Naive thymus-derived CD4-positive, alpha-beta T cell (primary cell): ENCODE measurements at regions of chr3 and their contacts with region 1.

Region 1: GRCh38 chr3:47781685-47782445 is at the start of gene SMARCC1:
- DNase-seq: peak; percentile 95 to 99 (median 97)
- ATAC-seq: peak; percentile 95
- H3K4me3 ChIP-seq: peak within 1 kb of the TSS; percentile 65
- H3K4me3 Mint-ChIP-seq: peak within 1 kb of the TSS; percentile 87 to 98 (median 94)
- H3K27ac ChIP-seq: peak within 1 kb of the TSS; percentile 99
- H3K27ac Mint-ChIP-seq: peak within 1 kb of the TSS; percentile 93 to 100 (median 98)
- H3K4me1 ChIP-seq: peaks cover 18 to 21% of the 10 kb centered on the region in 2 donors
- H3K4me1 Mint-ChIP-seq: peaks cover 18 to 30% (median 23%) of the 10 kb centered on the region in 7 donors
- H3K27me3 ChIP-seq: no peaks in the 10 kb centered on the region
- H3K27me3 Mint-ChIP-seq: peaks cover 0 to 3% (median 0%) of the 10 kb centered on the region in 5 donors
- total RNA-seq, gene SMARCC1: 92.2 to 125 (median 99.1) TPM

Region 2: DNA sequence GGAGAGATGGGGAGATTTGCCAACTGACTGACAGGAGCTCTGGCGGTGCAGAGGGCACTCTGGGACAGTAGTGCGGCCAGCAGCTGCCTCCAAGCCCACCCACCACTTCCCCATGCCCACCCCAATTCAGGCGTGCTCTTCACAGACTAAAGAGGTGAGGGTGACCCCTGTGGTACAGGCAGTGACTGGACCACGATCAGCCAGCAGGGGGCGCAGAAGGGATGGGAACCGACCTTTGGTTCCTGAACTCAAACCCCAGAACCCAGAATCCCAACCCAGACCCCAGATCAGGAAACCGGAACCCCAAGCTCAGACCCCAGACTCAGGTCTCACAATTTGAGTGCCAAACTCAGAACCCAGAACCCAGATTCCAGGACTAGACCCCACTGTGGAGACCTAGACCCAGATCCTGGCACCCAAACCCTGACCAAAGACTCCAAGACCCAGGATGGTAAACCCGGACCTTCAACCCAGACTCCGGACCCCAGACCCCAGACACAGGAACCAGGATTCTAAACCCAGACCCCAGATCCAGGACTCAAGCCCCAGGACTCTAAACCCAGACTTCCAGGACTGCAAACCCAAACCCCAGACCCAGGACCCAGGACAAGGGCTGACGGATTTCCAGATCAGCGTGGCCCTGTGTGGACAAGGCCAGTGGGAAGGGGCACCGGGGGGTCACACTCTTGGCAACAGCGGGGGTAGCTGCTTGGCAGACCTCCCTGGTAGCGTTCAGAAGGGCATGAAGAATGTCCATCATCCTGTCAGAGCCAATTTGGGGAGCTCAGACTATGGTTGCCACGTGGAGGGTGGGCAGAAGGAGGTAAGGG is 914.9 kb before region 1 on chr3:
- CTCF ChIA-PET with region 1: no interaction called
- POLR2A ChIA-PET with region 1: no interaction called
- intact Hi-C with region 1: loop called in 1 of 2 experiments (anchors 5 kb)
- DNase-seq: peak; percentile 38 to 80 (median 66)
- ATAC-seq: peak; percentile 69
- H3K4me3 ChIP-seq: no peak overlapping the region
- H3K4me3 Mint-ChIP-seq: no peak overlapping the region
- H3K27ac ChIP-seq: no peak overlapping the region
- H3K27ac Mint-ChIP-seq: peak overlapping the region in 1 of 9 donors; percentile 21
- H3K4me1 ChIP-seq: no peaks in the 10 kb centered on the region
- H3K4me1 Mint-ChIP-seq: no peaks in the 10 kb centered on the region
- H3K27me3 ChIP-seq: no peaks in the 10 kb centered on the region
- H3K27me3 Mint-ChIP-seq: peaks cover 0 to 8% (median 0%) of the 10 kb centered on the region in 5 donors

Region 3: DNA sequence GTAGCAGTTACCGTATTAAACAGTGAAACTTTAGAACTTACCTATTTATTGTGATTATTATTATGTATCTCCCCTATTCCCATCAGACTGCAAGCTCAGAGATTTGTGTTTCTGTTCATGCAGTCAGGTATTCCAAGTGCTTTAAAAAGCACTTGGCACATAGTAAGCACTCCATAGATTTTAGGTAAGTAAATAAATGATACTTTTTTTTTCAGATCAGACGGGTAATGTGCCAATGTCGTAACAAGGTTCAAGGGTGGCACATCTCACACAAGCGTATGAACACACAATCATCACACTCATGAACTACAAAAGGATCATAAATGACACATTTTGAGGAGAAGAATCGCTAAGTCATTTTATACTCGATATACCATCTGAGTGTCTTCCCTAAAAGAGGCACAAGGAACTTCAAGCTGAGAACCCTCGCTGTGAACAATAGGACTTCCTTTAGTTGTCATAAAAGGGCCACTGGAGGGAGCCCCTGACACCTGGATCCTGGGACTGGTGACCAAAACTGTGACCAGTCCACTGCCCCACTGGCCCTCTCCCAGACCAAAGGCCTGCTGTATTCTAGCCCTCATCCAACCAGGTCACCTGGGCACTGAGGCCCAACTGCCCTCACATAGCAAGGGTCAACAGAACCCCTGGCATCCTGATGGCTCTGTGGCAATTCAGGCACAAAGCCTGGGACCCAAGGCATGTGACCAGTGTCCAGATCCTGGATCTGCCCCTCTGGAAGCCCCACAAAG is 531.4 kb before region 1 on chr3:
- CTCF ChIA-PET with region 1: interaction called, 11 read pairs
- POLR2A ChIA-PET with region 1: no interaction called
- intact Hi-C with region 1: no loop called
- DNase-seq: no peak
- ATAC-seq: no peak
- H3K4me3 ChIP-seq: no peak overlapping the region
- H3K4me3 Mint-ChIP-seq: no peak overlapping the region
- H3K27ac ChIP-seq: no peak overlapping the region
- H3K27ac Mint-ChIP-seq: no peak overlapping the region
- H3K4me1 ChIP-seq: no peaks in the 10 kb centered on the region
- H3K4me1 Mint-ChIP-seq: no peaks in the 10 kb centered on the region
- H3K27me3 ChIP-seq: no peaks in the 10 kb centered on the region
- H3K27me3 Mint-ChIP-seq: no peaks in the 10 kb centered on the region

Region 4: DNA sequence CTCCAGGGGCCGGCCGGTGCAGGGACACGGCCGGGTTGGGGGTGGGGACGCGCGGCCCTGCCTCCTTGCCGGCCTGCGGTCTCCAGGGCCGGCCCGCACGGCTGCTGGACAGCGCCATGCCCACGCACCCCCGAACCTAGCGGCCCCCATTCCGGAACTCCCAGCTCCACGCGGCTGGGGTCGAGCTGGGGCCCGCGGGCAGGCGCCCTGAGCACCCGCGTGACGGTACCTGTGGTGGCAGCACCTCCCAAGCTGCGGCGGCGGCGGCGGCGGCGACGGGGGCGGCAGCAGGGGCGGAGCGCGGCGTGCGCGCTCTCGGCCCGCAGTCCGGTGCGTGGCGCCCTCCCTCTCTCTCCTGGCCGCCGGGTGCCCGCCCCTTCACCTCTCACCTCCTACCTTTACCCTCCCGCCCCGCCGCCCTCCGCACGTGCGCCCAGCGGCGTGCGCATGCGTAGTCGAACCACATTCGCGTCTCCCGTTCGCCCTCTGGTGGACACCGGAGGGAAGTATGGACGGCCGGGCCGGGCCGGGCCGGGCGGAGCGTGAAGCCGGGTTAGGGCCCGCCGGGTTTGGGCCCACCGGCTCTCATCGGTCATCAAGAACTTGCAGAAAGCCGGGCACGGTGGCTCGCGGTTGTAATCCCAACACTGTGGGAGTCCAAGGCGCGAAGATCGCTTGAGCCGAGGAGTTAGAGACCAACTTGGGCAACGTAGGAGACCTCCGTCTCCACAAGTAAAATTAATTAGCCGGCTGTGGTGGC is 306.1 kb before region 1 on chr3 and contains the start of gene SCAP:
- CTCF ChIA-PET with region 1: no interaction called
- POLR2A ChIA-PET with region 1: interaction called, 5 read pairs
- intact Hi-C with region 1: loop called (anchors 1 to 2 kb)
- DNase-seq: peak; percentile 93 to 99 (median 95)
- ATAC-seq: peak; percentile 97
- H3K4me3 ChIP-seq: peak within 1 kb of the TSS; percentile 69
- H3K4me3 Mint-ChIP-seq: peak within 1 kb of the TSS; percentile 89 to 98 (median 93)
- H3K27ac ChIP-seq: peak within 1 kb of the TSS; percentile 90
- H3K27ac Mint-ChIP-seq: peak within 1 kb of the TSS; percentile 86 to 96 (median 93)
- H3K4me1 ChIP-seq: peaks cover 19 to 20% of the 10 kb centered on the region in 2 donors
- H3K4me1 Mint-ChIP-seq: peaks cover 20 to 54% (median 36%) of the 10 kb centered on the region in 7 donors
- H3K27me3 ChIP-seq: no peaks in the 10 kb centered on the region
- H3K27me3 Mint-ChIP-seq: no peaks in the 10 kb centered on the region
- total RNA-seq, gene SCAP: 80.6 to 95.4 (median 92.9) TPM

Region 5: DNA sequence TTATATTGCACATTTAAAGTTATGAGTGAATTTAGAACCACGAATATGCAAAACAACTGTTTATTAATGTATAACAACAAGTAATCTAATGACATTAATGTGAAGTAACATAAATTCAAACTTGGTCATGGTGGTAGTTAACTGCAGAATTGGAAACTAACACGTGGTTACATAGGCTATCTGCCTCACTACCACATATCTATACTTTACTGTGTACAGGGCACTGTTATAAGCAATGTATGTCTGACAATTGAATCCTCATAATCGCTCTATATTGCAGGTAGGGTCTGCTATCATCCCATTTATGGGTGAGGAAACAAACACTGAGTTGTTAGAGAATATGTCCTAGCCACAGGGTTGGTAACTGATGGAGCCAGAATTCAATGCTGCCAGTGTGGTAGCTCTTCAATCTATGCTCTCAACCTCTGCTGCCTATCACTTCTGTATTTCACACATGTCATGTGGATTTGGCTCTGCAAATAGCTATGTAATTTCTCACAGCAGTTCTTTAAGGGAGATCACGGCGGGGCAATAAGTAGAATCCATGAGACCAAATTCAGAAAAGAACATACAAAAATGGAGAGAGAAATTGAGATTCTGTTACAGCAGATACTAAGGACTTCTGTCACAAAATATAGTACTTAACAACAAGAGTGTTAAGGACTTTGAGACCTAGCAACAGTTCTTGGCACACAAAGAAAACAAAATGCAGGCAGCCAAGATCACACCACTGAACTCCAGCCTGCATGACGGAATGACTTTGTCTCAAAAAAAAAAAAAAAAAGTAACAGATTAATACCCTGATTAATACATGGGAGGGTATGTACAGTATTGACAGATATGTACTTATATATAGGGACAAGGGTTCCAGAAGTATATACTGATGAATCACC is 103.2 kb before region 1 on chr3:
- CTCF ChIA-PET with region 1: interaction called, 3 read pairs
- POLR2A ChIA-PET with region 1: no interaction called
- intact Hi-C with region 1: loop called in 1 of 2 experiments (anchors 10 kb)
- DNase-seq: no peak
- ATAC-seq: no peak
- H3K4me3 ChIP-seq: no peak overlapping the region
- H3K4me3 Mint-ChIP-seq: no peak overlapping the region
- H3K27ac ChIP-seq: no peak overlapping the region
- H3K27ac Mint-ChIP-seq: peak overlapping the region in 1 of 9 donors; percentile 49
- H3K4me1 ChIP-seq: no peaks in the 10 kb centered on the region
- H3K4me1 Mint-ChIP-seq: peaks cover 0 to 2% (median 0%) of the 10 kb centered on the region in 7 donors
- H3K27me3 ChIP-seq: no peaks in the 10 kb centered on the region
- H3K27me3 Mint-ChIP-seq: no peaks in the 10 kb centered on the region

Region 6: DNA sequence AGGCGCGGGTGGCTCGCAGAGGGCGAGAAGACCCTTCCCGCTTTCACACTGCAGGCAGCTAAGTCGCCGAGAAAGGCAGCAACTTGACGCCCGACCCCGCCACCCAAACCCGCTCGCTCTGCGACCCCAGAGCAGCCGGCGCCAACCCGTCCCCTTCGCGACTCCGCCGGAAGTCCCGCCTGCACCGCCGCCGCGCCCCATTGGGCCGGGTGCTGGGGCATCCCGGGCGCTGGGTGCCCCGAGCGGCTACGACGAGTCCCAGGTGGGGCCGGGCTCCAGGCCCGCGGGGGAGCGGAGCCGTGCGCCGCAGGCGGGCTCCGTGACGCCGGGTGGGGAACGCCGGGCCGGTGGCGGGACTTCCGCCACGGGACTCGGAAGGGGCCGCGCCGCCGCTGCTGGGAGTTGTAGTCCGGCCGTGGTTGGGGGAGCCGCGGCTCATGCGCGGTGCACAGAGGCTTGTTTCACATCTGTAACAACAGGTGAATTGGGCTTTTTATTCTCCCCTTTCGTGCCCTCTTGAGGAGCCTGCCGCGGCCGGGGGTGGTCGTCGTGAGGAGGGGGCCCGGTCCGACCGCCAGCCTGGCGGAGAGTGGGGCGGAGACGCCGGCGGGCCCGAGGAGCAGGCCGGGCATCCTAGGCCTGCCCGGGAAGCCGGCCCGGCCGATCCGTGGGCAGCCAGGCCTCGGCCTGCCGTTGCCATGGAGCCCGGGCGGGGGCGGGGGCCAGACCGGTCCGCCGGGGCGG is 21.0 kb after region 1 on chr3 and contains the start of gene DHX30:
- CTCF ChIA-PET with region 1: no interaction called
- POLR2A ChIA-PET with region 1: interaction called, 5 read pairs
- intact Hi-C with region 1: loop called (anchors 1 kb)
- DNase-seq: peak; percentile 77 to 90 (median 82)
- ATAC-seq: peak; percentile 95
- H3K4me3 ChIP-seq: peak within 1 kb of the TSS; percentile 65
- H3K4me3 Mint-ChIP-seq: peak within 1 kb of the TSS; percentile 89 to 98 (median 95)
- H3K27ac ChIP-seq: peak within 1 kb of the TSS; percentile 92
- H3K27ac Mint-ChIP-seq: peak within 1 kb of the TSS; percentile 92 to 98 (median 95)
- H3K4me1 ChIP-seq: peaks cover 11 to 12% of the 10 kb centered on the region in 2 donors
- H3K4me1 Mint-ChIP-seq: peaks cover 6 to 25% (median 20%) of the 10 kb centered on the region in 7 donors
- H3K27me3 ChIP-seq: no peaks in the 10 kb centered on the region
- H3K27me3 Mint-ChIP-seq: no peaks in the 10 kb centered on the region
- total RNA-seq, gene DHX30: 64.1 to 103 (median 92.0) TPM

Region 7: GRCh38 chr3:47813551-47814177 is 31.8 kb after region 1 on chr3:
- CTCF ChIA-PET with region 1: no interaction called
- POLR2A ChIA-PET with region 1: no interaction called
- intact Hi-C with region 1: no loop called
- DNase-seq: no peak
- ATAC-seq: no peak
- H3K4me3 ChIP-seq: no peak overlapping the region
- H3K4me3 Mint-ChIP-seq: no peak overlapping the region
- H3K27ac ChIP-seq: no peak overlapping the region
- H3K27ac Mint-ChIP-seq: peak overlapping the region in 2 of 9 donors; percentile 44 to 45
- H3K4me1 ChIP-seq: no peaks in the 10 kb centered on the region
- H3K4me1 Mint-ChIP-seq: peaks cover 2 to 16% (median 6%) of the 10 kb centered on the region in 7 donors
- H3K27me3 ChIP-seq: no peaks in the 10 kb centered on the region
- H3K27me3 Mint-ChIP-seq: no peaks in the 10 kb centered on the region

Region 8: DNA sequence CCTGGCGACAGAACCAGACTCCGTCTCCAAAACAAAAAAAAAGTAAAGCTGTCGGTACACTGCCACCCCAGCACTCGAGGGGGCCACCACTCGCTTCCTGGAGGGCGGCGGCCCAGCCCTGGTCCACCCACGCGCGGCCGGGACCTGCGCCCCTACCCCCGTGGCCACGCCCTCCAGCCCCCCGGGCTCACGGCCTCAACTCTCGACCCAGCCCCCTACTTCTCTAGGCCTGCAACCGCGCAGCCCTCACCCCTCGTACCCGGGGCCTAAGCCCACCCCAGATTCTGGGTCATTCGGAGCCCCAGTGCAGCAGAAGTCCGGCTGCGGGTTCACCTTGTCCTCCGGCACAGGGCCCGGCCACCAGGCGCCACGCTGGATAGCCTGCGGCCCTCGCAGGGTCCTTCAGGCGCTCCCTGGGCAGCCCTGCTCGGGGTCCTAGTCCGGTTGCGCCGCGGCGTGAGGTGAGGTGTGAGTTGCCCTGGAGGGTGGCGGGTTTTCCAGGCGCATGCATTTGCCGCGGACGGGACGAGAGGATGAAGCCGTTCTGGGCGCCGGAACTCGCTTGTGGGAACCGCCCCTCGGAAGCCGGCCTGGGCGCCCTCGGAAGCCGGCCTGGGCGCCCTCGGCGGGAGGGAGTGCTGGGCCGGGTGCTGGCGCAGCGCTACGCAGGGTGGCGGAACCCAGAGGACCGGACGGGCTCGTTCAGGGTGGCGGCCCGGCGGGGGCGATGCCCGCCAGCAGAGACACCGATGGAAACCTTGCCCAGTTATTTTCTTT is 519.3 kb after region 1 on chr3:
- CTCF ChIA-PET with region 1: no interaction called
- POLR2A ChIA-PET with region 1: no interaction called
- intact Hi-C with region 1: loop called in 1 of 2 experiments (anchors 5 kb)
- DNase-seq: peak; percentile 69 to 95 (median 81)
- ATAC-seq: peak; percentile 97
- H3K4me3 ChIP-seq: peak within 1 kb of the TSS; percentile 89
- H3K4me3 Mint-ChIP-seq: peak within 1 kb of the TSS; percentile 84 to 97 (median 91)
- H3K27ac ChIP-seq: peak within 1 kb of the TSS; percentile 96
- H3K27ac Mint-ChIP-seq: peak within 1 kb of the TSS; percentile 81 to 98 (median 94)
- H3K4me1 ChIP-seq: peaks cover 10 to 12% of the 10 kb centered on the region in 2 donors
- H3K4me1 Mint-ChIP-seq: peaks cover 26 to 47% (median 40%) of the 10 kb centered on the region in 7 donors
- H3K27me3 ChIP-seq: no peaks in the 10 kb centered on the region
- H3K27me3 Mint-ChIP-seq: peaks cover 0 to 13% (median 0%) of the 10 kb centered on the region in 5 donors